Activated CD4-positive, alpha-beta T cell treated with anti-CD3 and anti-CD28 coated beads, Interleukin-2, amount 10 ng/mL, durations not matched to agents 24 days and 14 days (primary cell): ENCODE measurements at regions of chr17 and their contacts with region 1.

Region 1: DNA sequence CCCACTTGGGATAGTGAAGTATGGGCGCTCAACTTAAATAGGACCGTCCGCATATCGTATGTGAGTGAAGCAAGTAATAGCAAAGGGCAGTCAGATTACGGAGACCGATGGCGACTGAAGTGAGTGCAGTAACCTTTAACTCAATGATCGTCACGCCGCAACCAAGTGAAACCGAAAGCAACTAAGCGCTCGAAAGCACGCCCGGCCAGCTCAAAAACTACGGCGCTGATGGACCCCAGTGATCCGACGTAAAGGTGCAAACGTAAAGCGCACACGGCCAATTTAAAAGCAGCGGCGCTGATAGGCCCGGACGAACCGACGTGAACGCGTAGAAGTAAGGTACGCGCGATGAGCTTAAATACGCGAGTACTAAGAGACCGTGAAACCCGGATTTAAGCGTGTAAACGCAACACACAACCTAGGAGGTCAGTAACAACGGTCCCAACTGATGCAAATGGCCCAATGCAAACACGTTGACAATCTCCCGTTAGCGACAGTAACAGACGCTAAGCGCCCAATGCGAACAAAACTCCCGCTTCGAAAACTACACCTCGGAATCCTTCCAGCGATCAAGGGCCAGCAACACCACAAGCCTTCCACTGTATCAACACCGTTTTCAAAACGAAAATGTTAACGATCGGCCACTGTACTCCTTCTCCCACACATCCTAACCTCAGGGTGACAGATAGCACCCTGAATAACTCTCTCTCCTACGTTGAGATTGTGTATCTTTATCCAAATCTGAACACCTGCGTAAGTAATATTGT is 37.9 kb upstream of the ARL4D start:
- DNase-seq: peak; percentile 97
- H3K4me3 Mint-ChIP-seq: peak overlapping the region; percentile 89
- H3K27ac Mint-ChIP-seq: peak overlapping the region; percentile 100
- H3K4me1 Mint-ChIP-seq: peaks cover 31% of the 10 kb centered on the region
- H3K27me3 Mint-ChIP-seq: peaks cover 3% of the 10 kb centered on the region

Region 2: GRCh38 chr17:43170766-43171585 is 189.9 kb before region 1 on chr17 and contains the start of gene NBR1:
- intact Hi-C with region 1: loop called (anchors 1 kb)
- DNase-seq: peak; percentile 99
- H3K4me3 Mint-ChIP-seq: no peak within 1 kb of the TSS
- H3K27ac Mint-ChIP-seq: no peak within 1 kb of the TSS
- H3K4me1 Mint-ChIP-seq: peaks cover 30% of the 10 kb centered on the region
- H3K27me3 Mint-ChIP-seq: no peaks in the 10 kb centered on the region
- total RNA-seq, gene NBR1: 51.2 and 53.5 TPM in 2 replicates

Region 3: DNA sequence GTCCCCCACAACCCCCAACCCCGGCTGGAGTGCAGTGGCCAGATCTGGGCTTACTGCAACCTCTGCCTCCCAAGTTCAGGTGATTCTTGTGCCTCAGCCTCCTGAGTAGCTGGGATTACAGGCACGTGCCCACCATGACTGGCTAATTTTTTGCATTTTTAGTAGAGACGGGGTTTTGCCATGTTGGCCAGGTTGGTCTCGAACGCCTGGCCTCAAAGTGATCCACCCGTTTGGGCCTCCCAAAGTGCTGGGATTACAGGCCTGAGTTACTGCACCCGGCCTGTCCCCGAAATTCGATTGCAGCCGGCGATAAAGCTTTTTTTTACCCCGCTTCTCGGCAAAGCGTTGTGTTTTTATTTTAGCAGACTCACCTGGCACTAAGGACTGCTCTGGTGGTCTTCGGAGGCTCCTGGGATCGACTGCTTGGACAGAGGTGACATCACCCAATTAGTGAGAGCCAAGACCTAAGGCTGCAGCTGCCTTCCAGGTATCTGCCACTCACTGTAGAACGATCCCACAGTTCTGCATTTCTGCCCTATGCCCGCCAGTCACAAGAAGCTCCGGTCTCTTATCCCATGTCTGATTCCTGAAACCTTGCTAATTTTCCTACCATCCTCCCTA is 44.3 kb before region 1 on chr17:
- intact Hi-C with region 1: loop called (anchors 1 kb)
- DNase-seq: peak; percentile 79
- H3K4me3 Mint-ChIP-seq: peak overlapping the region; percentile 15
- H3K27ac Mint-ChIP-seq: no peak overlapping the region
- H3K4me1 Mint-ChIP-seq: peaks cover 20% of the 10 kb centered on the region
- H3K27me3 Mint-ChIP-seq: peaks cover 2% of the 10 kb centered on the region

Region 4: GRCh38 chr17:43330876-43331639 is 29.9 kb before region 1 on chr17:
- intact Hi-C with region 1: no loop called
- DNase-seq: no peak
- H3K4me3 Mint-ChIP-seq: no peak overlapping the region
- H3K27ac Mint-ChIP-seq: no peak overlapping the region
- H3K4me1 Mint-ChIP-seq: peaks cover 20% of the 10 kb centered on the region
- H3K27me3 Mint-ChIP-seq: peaks cover 12% of the 10 kb centered on the region

Region 5: GRCh38 chr17:43341715-43342588 is 19.0 kb before region 1 on chr17:
- intact Hi-C with region 1: loop called (anchors 1 kb)
- DNase-seq: no peak
- H3K4me3 Mint-ChIP-seq: peak overlapping the region; percentile 45
- H3K27ac Mint-ChIP-seq: peak overlapping the region; percentile 92
- H3K4me1 Mint-ChIP-seq: peaks cover 21% of the 10 kb centered on the region
- H3K27me3 Mint-ChIP-seq: no peaks in the 10 kb centered on the region

Region 6: GRCh38 chr17:43377056-43377810 is 16.3 kb after region 1 on chr17:
- intact Hi-C with region 1: no loop called
- DNase-seq: no peak
- H3K4me3 Mint-ChIP-seq: no peak overlapping the region
- H3K27ac Mint-ChIP-seq: no peak overlapping the region
- H3K4me1 Mint-ChIP-seq: peaks cover 4% of the 10 kb centered on the region
- H3K27me3 Mint-ChIP-seq: no peaks in the 10 kb centered on the region

Region 7: GRCh38 chr17:43388359-43389045 is 27.6 kb after region 1 on chr17:
- intact Hi-C with region 1: loop called (anchors 2 kb)
- DNase-seq: peak; percentile 98
- H3K4me3 Mint-ChIP-seq: peak overlapping the region; percentile 98
- H3K27ac Mint-ChIP-seq: peak overlapping the region; percentile 100
- H3K4me1 Mint-ChIP-seq: peaks cover 26% of the 10 kb centered on the region
- H3K27me3 Mint-ChIP-seq: peaks cover 2% of the 10 kb centered on the region

Region 8: DNA sequence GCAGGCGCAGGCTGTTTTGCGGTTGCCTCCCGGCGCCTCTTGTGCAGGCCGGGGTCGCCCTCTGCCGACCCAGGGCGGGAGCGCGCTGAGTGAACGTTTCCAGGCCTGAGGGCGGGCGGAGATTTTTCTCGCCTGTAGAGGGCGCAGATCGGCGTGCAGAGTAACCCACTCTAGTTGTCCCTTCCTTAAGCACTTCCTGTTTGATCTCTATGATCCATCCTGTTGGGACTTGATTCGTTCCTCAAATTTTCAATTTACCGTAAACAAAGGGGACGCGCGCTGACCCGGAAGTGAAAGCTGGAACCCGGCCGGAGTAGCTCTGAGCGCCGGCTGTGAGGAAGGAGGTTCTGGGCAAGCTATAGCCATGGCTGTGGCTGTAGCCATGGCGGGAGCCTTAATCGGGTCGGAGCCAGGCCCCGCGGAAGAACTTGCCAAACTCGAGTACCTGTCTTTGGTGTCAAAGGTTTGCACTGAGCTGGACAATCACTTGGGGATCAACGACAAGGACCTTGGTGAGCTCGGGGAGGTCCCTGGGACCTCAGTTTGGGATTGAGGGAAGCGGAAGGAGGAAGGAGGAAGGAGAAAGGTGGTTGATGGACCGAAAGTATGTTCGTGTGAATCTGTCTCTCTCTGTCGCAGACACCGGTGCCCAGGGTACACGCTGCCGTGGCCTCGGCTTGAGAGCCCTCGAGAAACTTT is 122.9 kb after region 1 on chr17 and contains the start of gene DHX8:
- intact Hi-C with region 1: loop called (anchors 1 kb)
- DNase-seq: peak; percentile 100
- H3K4me3 Mint-ChIP-seq: peak within 1 kb of the TSS; percentile 100
- H3K27ac Mint-ChIP-seq: peak within 1 kb of the TSS; percentile 99
- H3K4me1 Mint-ChIP-seq: peaks cover 21% of the 10 kb centered on the region
- H3K27me3 Mint-ChIP-seq: no peaks in the 10 kb centered on the region
- total RNA-seq, gene DHX8: 54.2 and 56.6 TPM in 2 replicates